ENCODE measurements at regions of chr1 and their contacts with region 1.

Region 1: DNA sequence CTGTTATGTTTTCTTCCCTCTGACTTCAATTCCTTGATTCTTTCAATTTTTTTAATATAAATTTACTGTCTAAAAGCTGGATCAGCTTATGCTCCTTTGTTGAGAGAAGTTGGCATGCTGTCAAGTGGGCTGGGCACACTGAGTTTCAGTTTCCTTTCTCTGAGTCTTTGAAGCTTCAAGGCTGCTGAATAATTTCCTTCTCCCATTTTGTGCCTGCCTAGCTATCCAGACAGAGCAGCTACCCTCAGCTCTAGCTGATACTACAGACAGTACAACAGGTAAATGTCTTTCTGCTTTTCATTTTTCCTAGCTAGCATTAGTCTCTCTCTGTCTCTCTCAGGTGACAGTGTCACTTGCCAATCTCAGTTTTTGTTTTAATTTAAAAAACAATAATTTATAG is at the start of gene IFI44:
- DNase-seq: peak; percentile 68
- ATAC-seq: peak; percentile 77
- total RNA-seq, gene IFI44: 10.4 TPM

Region 2: GRCh38 chr1:78617615-78618026 is 32.0 kb before region 1 on chr1:
- intact Hi-C with region 1: loop called (anchors 2 kb)
- DNase-seq: peak; percentile 70
- ATAC-seq: peak; percentile 86

Measured in Right ventricle myocardium inferior (tissue), 1 donor.